OCI-LY7 (cell line): ENCODE measurements at regions of chr1 and their contacts with region 1.

Region 1: DNA sequence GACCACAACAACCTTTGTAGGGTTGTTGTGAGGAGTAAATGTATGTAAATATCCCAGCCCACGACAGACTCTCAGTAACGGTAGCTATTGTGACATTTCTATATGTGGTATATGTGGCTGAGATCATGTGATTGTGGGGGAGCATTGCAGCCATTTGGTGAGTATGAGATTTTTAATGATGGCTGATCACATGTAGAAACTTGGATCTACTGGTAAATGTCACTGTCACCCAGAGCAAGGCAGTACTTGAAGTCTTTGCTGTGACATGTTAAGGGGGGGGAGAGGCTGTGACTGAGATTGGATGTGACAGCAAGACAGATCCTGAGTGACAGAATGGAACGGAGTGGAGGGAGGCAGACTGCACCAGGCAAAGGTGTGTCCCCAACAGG is 23.9 kb upstream of the MEF2D start:
- DNase-seq: no peak
- H3K4me3 ChIP-seq: peak overlapping the region; percentile 52
- H3K27ac ChIP-seq: peak overlapping the region; percentile 76
- H3K4me1 ChIP-seq: peaks cover 35% of the 10 kb centered on the region
- CTCF ChIP-seq: no peak

Region 2: DNA sequence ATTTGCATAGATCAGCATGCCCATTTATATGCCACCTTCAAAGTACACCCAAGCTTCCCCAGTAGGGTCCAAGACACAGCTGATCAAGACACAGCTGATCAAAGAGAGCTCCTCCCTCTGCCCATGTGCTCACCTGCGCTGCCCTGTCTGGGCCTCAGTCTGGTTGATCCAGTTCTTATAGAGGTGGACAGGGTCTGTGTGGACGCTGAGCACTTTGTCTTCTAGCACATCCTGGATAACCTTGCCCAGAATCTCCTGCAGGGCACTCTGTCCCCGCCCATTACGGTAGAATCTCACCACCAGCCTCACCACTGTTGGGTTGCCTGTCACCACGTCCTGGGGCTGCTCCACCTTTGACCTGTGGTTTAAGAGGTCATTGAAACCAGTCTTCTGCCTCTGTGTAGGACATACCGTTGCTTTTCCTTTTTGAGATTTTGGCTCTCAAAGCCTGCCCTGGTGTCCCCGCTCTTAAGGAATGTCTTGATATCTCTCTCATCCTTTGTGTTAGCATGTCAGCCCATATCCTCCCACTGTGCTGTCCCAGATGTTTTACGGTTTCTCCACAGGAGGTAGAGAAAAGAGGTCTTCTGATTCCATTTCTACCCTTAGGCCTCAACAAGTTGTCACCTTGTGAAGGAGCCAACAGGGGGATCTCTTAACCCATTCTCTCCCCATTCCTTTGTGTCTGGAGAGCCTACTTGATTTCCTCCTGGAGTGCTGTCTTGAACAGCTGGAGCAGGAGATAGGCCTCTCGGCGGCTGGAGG is 14.4 kb after region 1 on chr1:
- CTCF ChIA-PET with region 1: no interaction called
- POLR2A ChIA-PET with region 1: interaction called, 17 read pairs
- intact Hi-C with region 1: no loop called
- DNase-seq: no peak
- H3K4me3 ChIP-seq: no peak overlapping the region
- H3K27ac ChIP-seq: no peak overlapping the region
- H3K4me1 ChIP-seq: no peaks in the 10 kb centered on the region
- CTCF ChIP-seq: no peak

Region 3: GRCh38 chr1:156551866-156552265 is 27.4 kb after region 1 on chr1:
- CTCF ChIA-PET with region 1: no interaction called
- POLR2A ChIA-PET with region 1: interaction called, 10 read pairs
- intact Hi-C with region 1: no loop called
- DNase-seq: no peak
- H3K4me3 ChIP-seq: no peak overlapping the region
- H3K27ac ChIP-seq: peak overlapping the region; percentile 39
- H3K4me1 ChIP-seq: peaks cover 32% of the 10 kb centered on the region
- CTCF ChIP-seq: no peak

Region 4: GRCh38 chr1:156565519-156565918 is 41.0 kb after region 1 on chr1:
- CTCF ChIA-PET with region 1: no interaction called
- POLR2A ChIA-PET with region 1: no interaction called
- intact Hi-C with region 1: loop called (anchors 5 kb)
- DNase-seq: no peak
- H3K4me3 ChIP-seq: no peak overlapping the region
- H3K27ac ChIP-seq: no peak overlapping the region
- H3K4me1 ChIP-seq: no peaks in the 10 kb centered on the region
- CTCF ChIP-seq: no peak

Region 5: GRCh38 chr1:156712626-156713025 is 188.2 kb after region 1 on chr1:
- CTCF ChIA-PET with region 1: no interaction called
- POLR2A ChIA-PET with region 1: no interaction called
- intact Hi-C with region 1: no loop called
- DNase-seq: no peak
- H3K4me3 ChIP-seq: no peak overlapping the region
- H3K27ac ChIP-seq: no peak overlapping the region
- H3K4me1 ChIP-seq: no peaks in the 10 kb centered on the region
- CTCF ChIP-seq: no peak